WTC11 (cell line): ENCODE measurements at regions of chr7 and their contacts with region 1.

Region 1: GRCh38 chr7:100469227-100470044 is 5.4 kb upstream of the SPACDR start:
- DNase-seq: peak; percentile 95
- ATAC-seq: peak; percentile 85
- H3K4me3 Mint-ChIP-seq: no peak overlapping the region
- H3K27ac Mint-ChIP-seq: no peak overlapping the region
- H3K4me1 Mint-ChIP-seq: peaks cover 13% of the 10 kb centered on the region; the same call in 1 of the 2 replicates
- H3K27me3 Mint-ChIP-seq: no peaks in the 10 kb centered on the region
- CTCF ChIP-seq: peak; percentile 97

Region 2: GRCh38 chr7:100444311-100445278 is 24.8 kb before region 1 on chr7:
- CTCF ChIA-PET with region 1: interaction called, 16 read pairs
- POLR2A ChIA-PET with region 1: no interaction called
- DNase-seq: no peak
- ATAC-seq: peak; percentile 31
- H3K4me3 Mint-ChIP-seq: no peak overlapping the region
- H3K27ac Mint-ChIP-seq: peak overlapping the region; percentile 63
- H3K4me1 Mint-ChIP-seq: peaks cover 5% of the 10 kb centered on the region
- H3K27me3 Mint-ChIP-seq: no peaks in the 10 kb centered on the region
- CTCF ChIP-seq: no peak

Region 3: DNA sequence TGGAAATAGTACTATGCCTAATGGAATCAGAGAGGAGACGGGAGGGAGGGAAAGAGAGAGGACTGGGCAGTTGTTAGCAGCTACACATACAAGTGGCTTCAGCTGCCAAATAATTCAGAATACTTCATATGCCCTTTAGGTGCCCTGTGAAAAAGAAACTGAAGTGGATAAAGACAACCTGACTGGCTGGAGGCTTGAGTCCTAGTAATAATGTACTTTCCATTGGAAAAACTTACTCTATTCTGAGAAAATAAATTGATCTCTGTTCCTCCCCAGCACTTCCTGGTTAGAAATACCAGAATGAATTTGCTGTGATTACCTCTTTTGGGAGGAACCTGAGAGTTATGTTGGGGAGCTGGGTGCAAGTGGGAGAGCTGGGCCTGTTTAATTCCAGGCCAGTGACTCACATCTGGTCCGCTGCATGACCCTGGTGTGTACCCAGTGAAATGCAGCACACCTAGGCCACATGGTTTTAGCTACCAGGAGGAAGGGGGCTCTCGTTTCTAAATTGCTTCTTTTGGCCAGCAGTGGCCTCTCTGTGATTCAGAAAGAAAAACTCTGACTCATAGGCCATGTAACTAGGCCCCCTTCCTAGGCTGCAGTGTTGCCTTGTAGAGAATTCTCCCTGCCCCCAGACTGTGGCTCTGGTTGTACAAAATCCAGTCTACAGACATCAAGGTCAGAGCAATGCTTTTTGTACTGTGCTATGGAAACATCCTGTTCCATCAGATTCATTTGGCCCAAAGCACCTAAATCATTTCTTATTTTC is 76.1 kb after region 1 on chr7:
- CTCF ChIA-PET with region 1: interaction called, 10 read pairs
- POLR2A ChIA-PET with region 1: no interaction called
- DNase-seq: no peak
- ATAC-seq: peak; percentile 83
- H3K4me3 Mint-ChIP-seq: no peak overlapping the region
- H3K27ac Mint-ChIP-seq: peak overlapping the region; percentile 81
- H3K4me1 Mint-ChIP-seq: peaks cover 65% of the 10 kb centered on the region
- H3K27me3 Mint-ChIP-seq: peaks cover 11% of the 10 kb centered on the region
- CTCF ChIP-seq: no peak

Region 4: GRCh38 chr7:100655908-100656674 is 186.7 kb after region 1 on chr7 and contains the start of gene ACTL6B:
- CTCF ChIA-PET with region 1: interaction called, 10 read pairs
- POLR2A ChIA-PET with region 1: no interaction called
- DNase-seq: peak; percentile 94
- ATAC-seq: peak; percentile 94
- H3K4me3 Mint-ChIP-seq: 0 out of 2 replicates have a peak within 1 kb of the TSS, but pooled peaks have one; percentile 27
- H3K27ac Mint-ChIP-seq: no peak within 1 kb of the TSS
- H3K4me1 Mint-ChIP-seq: peaks cover 2% of the 10 kb centered on the region; the same call in 1 of the 2 replicates
- H3K27me3 Mint-ChIP-seq: peaks cover 69% of the 10 kb centered on the region
- CTCF ChIP-seq: no peak
- total RNA-seq, gene ACTL6B: 0.96 to 1.3 TPM (median 0.99 TPM) in 3 replicates